ENCODE measurements at regions of chr11 and their contacts with region 1.

Region 1: GRCh38 chr11:73965076-73965860 is 14.4 kb downstream of the DNAJB13 start:
- DNase-seq: no peak
- ATAC-seq: no peak
- H3K4me3 ChIP-seq: no peak overlapping the region
- H3K27ac ChIP-seq: no peak overlapping the region
- H3K4me1 ChIP-seq: no peaks in the 10 kb centered on the region
- H3K27me3 ChIP-seq: no peaks in the 10 kb centered on the region
- CTCF ChIP-seq: no peak
- EP300 ChIP-seq: no peak
- POLR2A ChIP-seq: no peak
- RAD21 ChIP-seq: no peak

Region 2: GRCh38 chr11:73360336-73361013 is 604.8 kb before region 1 on chr11:
- CTCF ChIA-PET with region 1: no interaction called
- POLR2A ChIA-PET with region 1: no interaction called
- RAD21 ChIA-PET with region 1: no interaction called
- SMC1A ChIA-PET with region 1: no interaction called
- in situ Hi-C with region 1: no loop called
- intact Hi-C with region 1: no loop called
- DNase-seq: no peak
- ATAC-seq: peak; percentile 60
- H3K4me3 ChIP-seq: no peak overlapping the region
- H3K27ac ChIP-seq: no peak overlapping the region
- H3K4me1 ChIP-seq: no peaks in the 10 kb centered on the region
- H3K27me3 ChIP-seq: no peaks in the 10 kb centered on the region
- CTCF ChIP-seq: peak; percentile 19 to 45 (median 43); a peak in 5 of 6 replicates
- EP300 ChIP-seq: no peak
- POLR2A ChIP-seq: no peak
- RAD21 ChIP-seq: peak; percentile 42

Region 3: DNA sequence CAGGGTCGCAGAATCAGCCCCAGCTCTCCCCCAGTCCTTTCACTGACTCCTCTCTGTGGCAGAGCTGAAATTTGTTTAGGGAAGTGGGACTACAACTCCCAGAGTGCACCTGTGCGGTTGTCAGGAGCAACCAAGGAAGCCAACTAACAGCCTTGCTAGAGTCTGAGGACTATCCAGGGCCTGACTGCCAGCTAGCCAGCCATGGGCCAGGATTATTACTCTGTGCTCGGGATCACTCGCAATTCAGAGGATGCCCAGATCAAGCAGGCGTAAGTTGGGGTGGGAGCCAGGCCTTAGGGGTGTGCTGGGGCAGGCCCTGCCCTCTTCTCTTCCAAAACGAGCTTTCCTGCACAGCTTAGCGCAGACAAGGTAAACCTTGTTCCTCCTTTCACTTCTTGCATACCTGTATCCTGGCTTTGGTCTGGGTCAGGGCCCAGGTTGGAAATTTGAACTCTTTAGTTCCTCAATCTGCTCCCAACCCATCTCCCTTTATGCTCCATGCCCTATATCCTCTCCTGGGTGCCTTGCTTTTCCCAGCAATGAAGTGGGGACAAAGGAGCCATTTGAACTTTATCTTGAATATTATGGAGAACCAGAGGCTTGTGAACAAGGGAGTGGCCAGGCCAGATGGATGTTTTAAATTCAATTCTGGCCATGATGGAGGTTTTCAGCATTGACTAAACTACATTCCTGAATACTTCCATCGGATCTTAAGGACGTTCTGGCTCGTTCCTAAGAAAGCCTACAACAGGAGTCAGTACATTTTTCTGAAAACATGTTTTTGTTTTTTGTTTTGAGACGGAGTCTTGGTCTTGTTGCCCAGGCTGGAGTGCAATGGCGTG is 14.2 kb before region 1 on chr11 and contains the start of gene DNAJB13:
- CTCF ChIA-PET with region 1: interaction called, 16 read pairs
- POLR2A ChIA-PET with region 1: no interaction called
- RAD21 ChIA-PET with region 1: interaction called, 5 read pairs
- SMC1A ChIA-PET with region 1: interaction called, 4 read pairs
- in situ Hi-C with region 1: no loop called
- intact Hi-C with region 1: no loop called
- DNase-seq: peak; percentile 23
- ATAC-seq: peak; percentile 98
- H3K4me3 ChIP-seq: no peak within 1 kb of the TSS
- H3K27ac ChIP-seq: no peak within 1 kb of the TSS
- H3K4me1 ChIP-seq: peaks cover 3% of the 10 kb centered on the region; the same call in 1 of the 2 replicates
- H3K27me3 ChIP-seq: no peaks in the 10 kb centered on the region
- CTCF ChIP-seq: no peak
- EP300 ChIP-seq: no peak
- POLR2A ChIP-seq: no peak
- RAD21 ChIP-seq: no peak
- polyA plus RNA-seq, gene DNAJB13: not detected

Region 4: GRCh38 chr11:74018331-74019005 is 53.2 kb after region 1 on chr11:
- CTCF ChIA-PET with region 1: interaction called, 7 read pairs
- POLR2A ChIA-PET with region 1: no interaction called
- RAD21 ChIA-PET with region 1: interaction called, 9 read pairs
- SMC1A ChIA-PET with region 1: interaction called, 10 read pairs
- in situ Hi-C with region 1: no loop called
- intact Hi-C with region 1: no loop called
- DNase-seq: no peak
- ATAC-seq: no peak
- H3K4me3 ChIP-seq: no peak overlapping the region
- H3K27ac ChIP-seq: no peak overlapping the region
- H3K4me1 ChIP-seq: peaks cover 21% of the 10 kb centered on the region
- H3K27me3 ChIP-seq: no peaks in the 10 kb centered on the region
- CTCF ChIP-seq: no peak
- EP300 ChIP-seq: no peak
- POLR2A ChIP-seq: no peak
- RAD21 ChIP-seq: no peak

Region 5: DNA sequence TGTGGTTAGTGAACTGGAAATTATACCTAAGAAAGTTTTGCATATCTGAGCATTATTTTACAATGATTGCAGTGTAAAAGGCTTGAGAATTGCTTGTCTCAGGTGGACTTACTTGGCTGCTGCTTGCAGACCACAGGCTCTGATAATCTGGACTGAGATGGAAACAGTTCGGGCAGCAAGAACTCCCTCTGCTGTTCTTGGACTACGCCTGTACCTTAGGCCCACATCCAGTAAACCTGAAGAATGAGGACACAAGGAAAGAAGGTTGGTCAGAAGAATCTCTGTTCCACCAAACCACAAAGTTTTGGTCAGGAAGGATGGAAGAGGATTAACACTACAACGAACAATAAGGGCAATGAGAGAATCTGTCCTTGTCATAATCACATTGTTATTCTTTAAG is 125.4 kb after region 1 on chr11:
- CTCF ChIA-PET with region 1: interaction called, 4 read pairs
- POLR2A ChIA-PET with region 1: no interaction called
- RAD21 ChIA-PET with region 1: interaction called, 3 read pairs
- SMC1A ChIA-PET with region 1: no interaction called
- in situ Hi-C with region 1: no loop called
- intact Hi-C with region 1: loop called (anchors 5 kb)
- DNase-seq: no peak
- ATAC-seq: 0 out of 3 replicates have a peak, but pooled peaks have one; percentile 28
- H3K4me3 ChIP-seq: no peak overlapping the region
- H3K27ac ChIP-seq: no peak overlapping the region
- H3K4me1 ChIP-seq: no peaks in the 10 kb centered on the region
- H3K27me3 ChIP-seq: no peaks in the 10 kb centered on the region
- CTCF ChIP-seq: peak; percentile 9 to 33 (median 11); a peak in 2 of 6 replicates
- EP300 ChIP-seq: no peak
- POLR2A ChIP-seq: no peak
- RAD21 ChIP-seq: peak; percentile 40; the same call in 1 of the 2 replicates

Region 6: DNA sequence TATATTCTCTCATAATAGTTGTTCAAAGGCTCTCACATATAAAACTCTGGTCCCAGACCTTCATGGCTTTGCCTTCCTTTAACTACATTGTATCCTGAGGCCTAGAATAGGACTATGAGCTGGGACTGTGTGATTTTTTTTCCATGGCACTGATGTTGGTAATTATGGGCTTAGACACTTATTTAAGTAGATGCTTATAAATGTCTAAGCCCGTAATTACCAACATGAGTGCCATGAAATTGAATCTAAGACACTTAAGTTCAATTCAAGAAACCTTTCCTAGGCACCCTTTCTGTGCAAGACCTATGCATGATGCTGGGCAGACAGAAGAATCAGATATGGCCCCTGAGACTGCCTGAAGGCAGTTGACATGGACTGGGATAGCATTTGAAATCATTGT is 283.2 kb after region 1 on chr11:
- CTCF ChIA-PET with region 1: no interaction called
- POLR2A ChIA-PET with region 1: no interaction called
- RAD21 ChIA-PET with region 1: no interaction called
- SMC1A ChIA-PET with region 1: no interaction called
- in situ Hi-C with region 1: no loop called
- intact Hi-C with region 1: loop called (anchors 10 kb)
- DNase-seq: no peak
- ATAC-seq: no peak
- H3K4me3 ChIP-seq: no peak overlapping the region
- H3K27ac ChIP-seq: no peak overlapping the region
- H3K4me1 ChIP-seq: no peaks in the 10 kb centered on the region
- H3K27me3 ChIP-seq: no peaks in the 10 kb centered on the region
- CTCF ChIP-seq: no peak
- EP300 ChIP-seq: no peak
- POLR2A ChIP-seq: no peak
- RAD21 ChIP-seq: no peak

Region 7: DNA sequence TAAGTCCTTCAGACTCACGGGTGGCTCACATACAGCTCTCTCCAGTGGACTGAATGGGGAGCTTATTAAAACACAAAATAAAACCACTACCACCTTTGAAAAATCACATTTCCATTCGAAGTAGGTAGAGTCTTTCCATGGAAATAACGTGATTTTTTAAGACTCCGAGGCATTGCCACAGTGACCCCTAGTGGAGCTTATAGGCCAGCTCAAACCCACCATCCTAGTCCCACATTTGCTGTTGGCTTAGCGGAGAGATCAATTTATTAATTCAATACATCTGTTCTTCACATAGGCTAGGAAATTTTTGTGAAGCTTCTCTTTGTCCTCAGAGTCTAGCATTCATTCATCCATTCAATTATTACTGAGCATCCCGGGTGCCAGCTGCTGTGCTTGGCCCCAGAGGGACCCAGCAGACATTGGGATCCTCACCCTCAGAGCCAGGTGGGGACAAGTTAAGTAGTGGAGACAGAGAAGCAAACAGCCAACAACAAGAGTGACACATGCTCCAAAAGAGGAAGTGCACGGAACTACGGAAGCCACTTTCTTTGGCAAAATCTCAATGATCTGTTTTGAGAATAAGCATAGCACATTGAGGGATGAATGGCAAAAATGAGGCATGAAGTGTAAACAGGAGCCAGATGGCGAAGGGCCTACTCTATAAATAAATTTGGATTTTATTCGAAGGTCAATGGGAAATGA is 356.4 kb after region 1 on chr11:
- CTCF ChIA-PET with region 1: interaction called, 7 read pairs
- POLR2A ChIA-PET with region 1: no interaction called
- RAD21 ChIA-PET with region 1: interaction called, 4 read pairs
- SMC1A ChIA-PET with region 1: interaction called, 6 read pairs
- in situ Hi-C with region 1: no loop called
- intact Hi-C with region 1: loop called (anchors 1 kb)
- DNase-seq: no peak
- ATAC-seq: peak; percentile 49; the same call in 2 of the 3 replicates
- H3K4me3 ChIP-seq: no peak overlapping the region
- H3K27ac ChIP-seq: no peak overlapping the region
- H3K4me1 ChIP-seq: no peaks in the 10 kb centered on the region
- H3K27me3 ChIP-seq: 0 out of 4 replicates have a peak, but pooled peaks cover 0 to 3% of the 10 kb centered on the region in 2 experiments
- CTCF ChIP-seq: peak; percentile 49 to 72 (median 61); a peak in 5 of 6 replicates
- EP300 ChIP-seq: no peak
- POLR2A ChIP-seq: no peak
- RAD21 ChIP-seq: peak; percentile 53